ENCODE measurements at regions of chr7 and their contacts with region 1.

Region 1: DNA sequence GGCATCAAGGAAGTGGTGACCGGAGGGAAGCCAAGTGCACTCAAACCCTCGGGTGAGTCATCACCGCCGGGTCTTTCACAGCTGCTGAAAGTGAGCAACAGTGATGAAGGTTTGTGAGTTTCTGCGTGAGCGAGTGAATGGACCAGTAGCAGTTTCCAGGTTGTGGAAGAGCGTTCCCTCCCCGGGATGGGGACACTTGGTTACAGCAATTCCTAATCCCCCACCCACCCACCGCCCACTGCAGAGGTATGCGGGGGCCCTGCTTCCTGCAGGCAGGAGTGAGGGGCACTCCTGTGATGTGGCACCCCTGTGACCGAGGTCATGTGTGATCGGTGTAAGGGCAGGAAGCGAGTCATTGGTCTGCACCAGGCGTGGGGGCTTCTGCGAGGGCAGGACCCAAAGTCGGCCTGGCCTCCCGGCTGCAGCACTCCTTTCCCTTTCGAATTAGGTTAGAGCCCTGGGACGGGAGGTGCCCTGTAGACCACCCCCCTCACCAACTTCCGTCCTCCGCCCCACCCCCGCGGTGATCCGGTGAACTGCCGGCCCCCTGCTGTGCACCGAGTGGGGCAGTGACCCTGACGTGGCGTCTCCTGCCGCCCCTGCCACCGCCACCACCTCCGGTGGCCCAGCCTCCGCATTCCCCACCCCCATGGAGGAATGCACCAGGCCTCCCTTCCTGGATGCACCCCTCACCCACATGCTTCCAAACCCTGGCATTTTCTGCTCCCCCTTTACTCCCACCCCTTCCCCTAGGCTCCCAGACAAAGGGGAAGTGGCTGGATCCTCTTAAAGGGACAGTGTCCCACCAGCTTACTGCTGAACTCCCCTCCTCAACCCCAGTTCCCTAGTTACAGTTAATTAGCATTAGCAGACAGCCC is 10.9 kb downstream of the LIMK1 start:
- DNase-seq: peak; percentile 92
- ATAC-seq: peak; percentile 77
- H3K4me3 ChIP-seq: peak overlapping the region; percentile 2 to 18
- H3K27ac ChIP-seq: no peak overlapping the region
- H3K4me1 ChIP-seq: no peaks in the 10 kb centered on the region
- H3K27me3 ChIP-seq: no peaks in the 10 kb centered on the region

Region 2: GRCh38 chr7:73954181-73954580 is 140.3 kb before region 1 on chr7:
- intact Hi-C with region 1: no loop called
- DNase-seq: no peak
- ATAC-seq: no peak
- H3K4me3 ChIP-seq: no peak overlapping the region
- H3K27ac ChIP-seq: no peak overlapping the region
- H3K4me1 ChIP-seq: no peaks in the 10 kb centered on the region
- H3K27me3 ChIP-seq: no peaks in the 10 kb centered on the region

Region 3: GRCh38 chr7:74068393-74069085 is 25.9 kb before region 1 on chr7:
- intact Hi-C with region 1: loop called in 1 of 2 experiments (anchors 1 kb)
- DNase-seq: peak; percentile 56 to 76
- ATAC-seq: peak; percentile 26
- H3K4me3 ChIP-seq: no peak overlapping the region
- H3K27ac ChIP-seq: peak overlapping the region in 1 of 2 donors; percentile 55
- H3K4me1 ChIP-seq: no peaks in the 10 kb centered on the region
- H3K27me3 ChIP-seq: no peaks in the 10 kb centered on the region

Region 4: GRCh38 chr7:74183613-74184450 is 89.4 kb after region 1 on chr7:
- intact Hi-C with region 1: no loop called
- DNase-seq: no peak
- ATAC-seq: no peak
- H3K4me3 ChIP-seq: no peak overlapping the region
- H3K27ac ChIP-seq: no peak overlapping the region
- H3K4me1 ChIP-seq: peaks cover 2 to 7% of the 10 kb centered on the region in 2 donors
- H3K27me3 ChIP-seq: no peaks in the 10 kb centered on the region